ENCODE measurements at regions of chr1 and their contacts with region 1.

Region 1: DNA sequence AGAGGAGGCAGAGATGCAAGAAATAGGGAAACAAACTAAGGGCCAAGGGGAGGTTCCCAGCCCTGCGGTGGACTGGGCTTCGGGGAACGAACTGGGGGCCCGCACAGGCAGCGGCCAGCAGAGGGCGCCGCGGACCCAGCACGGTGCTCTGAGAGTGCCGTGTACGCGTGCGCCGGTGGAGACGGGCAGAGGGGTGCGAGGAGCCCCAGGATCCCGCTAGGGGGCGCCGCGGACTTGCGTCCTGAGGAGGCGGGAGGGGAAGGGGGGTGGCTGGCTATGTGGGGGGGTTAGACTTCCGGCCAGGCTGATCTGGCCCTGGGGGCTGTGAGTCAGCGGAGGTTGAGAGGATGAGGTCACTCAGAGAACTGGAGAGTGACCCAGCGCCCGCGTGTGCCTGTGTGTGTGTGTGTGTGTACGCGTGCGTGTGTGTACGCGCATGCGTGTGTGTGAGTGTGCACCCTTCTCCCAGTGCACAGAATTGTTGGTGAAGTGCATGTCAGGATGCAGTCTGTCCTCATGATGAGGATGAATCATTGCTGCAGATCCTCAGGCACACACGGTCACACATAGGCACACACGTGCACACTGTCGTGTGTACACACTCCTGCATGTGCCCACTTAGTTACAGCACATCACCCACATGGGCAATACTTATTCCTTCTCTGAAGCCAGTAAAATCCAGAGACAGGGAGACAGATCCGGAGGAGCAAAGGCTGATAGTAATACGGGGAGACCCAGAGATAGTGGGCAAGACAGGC is 17.0 kb downstream of the NES start:
- DNase-seq: peak; percentile 94
- ATAC-seq: peak; percentile 74
- H3K4me3 ChIP-seq: peak overlapping the region; percentile 69 to 90
- H3K27ac ChIP-seq: peak overlapping the region; percentile 99
- H3K4me1 ChIP-seq: peaks cover 46 to 77% of the 10 kb centered on the region in 2 experiments
- H3K27me3 ChIP-seq: no peaks in the 10 kb centered on the region
- CTCF ChIP-seq: peak in 2 of 3 experiments; percentile 99; a peak in 4 of 6 replicates
- POLR2A ChIP-seq: peak; percentile 76
- RAD21 ChIP-seq: no peak

Region 2: GRCh38 chr1:156677616-156678596 is 17.7 kb after region 1 on chr1:
- CTCF ChIA-PET with region 1: interaction called, 22 read pairs
- POLR2A ChIA-PET with region 1: interaction called, 33 read pairs
- RAD21 ChIA-PET with region 1: interaction called in 1 of 2 experiments, 4 read pairs
- intact Hi-C with region 1: loop called (anchors 1 kb)
- DNase-seq: no peak
- ATAC-seq: peak; percentile 71
- H3K4me3 ChIP-seq: peak overlapping the region; percentile 39 to 53
- H3K27ac ChIP-seq: peak overlapping the region; percentile 36; the same call in 1 of the 2 replicates
- H3K4me1 ChIP-seq: peaks cover 14 to 32% of the 10 kb centered on the region in 2 experiments
- H3K27me3 ChIP-seq: no peaks in the 10 kb centered on the region
- CTCF ChIP-seq: peak; percentile 88 to 98 (median 95)
- POLR2A ChIP-seq: no peak
- RAD21 ChIP-seq: peak; percentile 99

Region 3: GRCh38 chr1:156705918-156706656 is 45.9 kb after region 1 on chr1:
- CTCF ChIA-PET with region 1: interaction called, 18 read pairs
- POLR2A ChIA-PET with region 1: interaction called, 21 read pairs
- RAD21 ChIA-PET with region 1: no interaction called
- intact Hi-C with region 1: loop called (anchors 1 kb)
- DNase-seq: no peak
- ATAC-seq: peak; percentile 61
- H3K4me3 ChIP-seq: peak overlapping the region; percentile 62 to 63
- H3K27ac ChIP-seq: peak overlapping the region; percentile 89
- H3K4me1 ChIP-seq: peaks cover 72 to 87% of the 10 kb centered on the region in 2 experiments
- H3K27me3 ChIP-seq: no peaks in the 10 kb centered on the region
- CTCF ChIP-seq: peak in 2 of 3 experiments; percentile 80 to 92; a peak in 4 of 6 replicates
- POLR2A ChIP-seq: peak; percentile 24
- RAD21 ChIP-seq: no peak

Measured in HCT116 (cell line).